ENCODE measurements at regions of chr9 and their contacts with region 1.

Region 1: GRCh38 chr9:6681147-6681956 is 35.8 kb upstream of the GLDC start:
- DNase-seq: peak; percentile 79 to 94 (median 88)
- ATAC-seq: peak; percentile 87 to 93 (median 90)
- H3K4me3 ChIP-seq: peak overlapping the region; percentile 79 to 93
- H3K4me3 Mint-ChIP-seq: peak overlapping the region; percentile 91 to 93 (median 91)
- H3K27ac ChIP-seq: peak overlapping the region; percentile 98
- H3K27ac Mint-ChIP-seq: peak overlapping the region; percentile 98
- H3K4me1 ChIP-seq: peaks cover 15 to 21% of the 10 kb centered on the region in 2 experiments
- H3K4me1 Mint-ChIP-seq: peaks cover 19 to 24% (median 22%) of the 10 kb centered on the region in 3 donors
- H3K27me3 ChIP-seq: no peaks in the 10 kb centered on the region
- H3K27me3 Mint-ChIP-seq: no peaks in the 10 kb centered on the region

Region 2: DNA sequence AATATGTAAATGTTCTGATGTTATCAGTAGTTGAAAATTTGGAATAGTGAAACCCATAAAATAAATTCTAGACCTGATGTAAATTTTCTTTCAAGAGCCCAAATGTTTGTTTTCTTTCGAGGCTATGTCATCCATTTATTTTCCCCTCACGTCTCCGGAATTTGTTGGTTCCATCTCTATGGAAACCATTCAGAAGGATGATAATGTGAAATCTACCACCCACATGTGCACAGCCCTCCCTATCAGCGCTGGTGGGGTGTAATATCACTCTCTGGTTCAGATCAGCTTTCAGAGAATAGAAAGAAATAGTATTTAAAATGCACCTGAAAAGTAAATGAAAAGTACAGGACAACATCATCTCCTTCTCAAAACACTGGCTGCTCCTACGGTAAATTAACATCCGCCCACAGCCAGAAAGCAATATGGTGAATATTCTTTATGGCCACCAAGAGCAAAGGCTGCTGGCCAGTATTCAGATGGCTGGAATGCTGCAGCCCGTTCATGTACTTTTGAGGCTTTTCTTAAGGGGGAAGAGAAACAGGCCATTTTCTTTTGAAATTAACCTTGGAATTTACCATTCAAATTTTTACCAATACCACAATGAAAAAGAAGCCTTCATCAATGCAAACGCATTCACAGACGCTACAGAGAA is 64.3 kb before region 1 on chr9:
- CTCF ChIA-PET with region 1: no interaction called
- POLR2A ChIA-PET with region 1: interaction called in 1 of 2 experiments, 12 read pairs
- DNase-seq: no peak
- ATAC-seq: no peak
- H3K4me3 ChIP-seq: no peak overlapping the region
- H3K4me3 Mint-ChIP-seq: no peak overlapping the region
- H3K27ac ChIP-seq: no peak overlapping the region
- H3K27ac Mint-ChIP-seq: no peak overlapping the region
- H3K4me1 ChIP-seq: no peaks in the 10 kb centered on the region
- H3K4me1 Mint-ChIP-seq: no peaks in the 10 kb centered on the region
- H3K27me3 ChIP-seq: no peaks in the 10 kb centered on the region
- H3K27me3 Mint-ChIP-seq: peaks cover 3 to 4% of the 10 kb centered on the region in 2 donors

Region 3: DNA sequence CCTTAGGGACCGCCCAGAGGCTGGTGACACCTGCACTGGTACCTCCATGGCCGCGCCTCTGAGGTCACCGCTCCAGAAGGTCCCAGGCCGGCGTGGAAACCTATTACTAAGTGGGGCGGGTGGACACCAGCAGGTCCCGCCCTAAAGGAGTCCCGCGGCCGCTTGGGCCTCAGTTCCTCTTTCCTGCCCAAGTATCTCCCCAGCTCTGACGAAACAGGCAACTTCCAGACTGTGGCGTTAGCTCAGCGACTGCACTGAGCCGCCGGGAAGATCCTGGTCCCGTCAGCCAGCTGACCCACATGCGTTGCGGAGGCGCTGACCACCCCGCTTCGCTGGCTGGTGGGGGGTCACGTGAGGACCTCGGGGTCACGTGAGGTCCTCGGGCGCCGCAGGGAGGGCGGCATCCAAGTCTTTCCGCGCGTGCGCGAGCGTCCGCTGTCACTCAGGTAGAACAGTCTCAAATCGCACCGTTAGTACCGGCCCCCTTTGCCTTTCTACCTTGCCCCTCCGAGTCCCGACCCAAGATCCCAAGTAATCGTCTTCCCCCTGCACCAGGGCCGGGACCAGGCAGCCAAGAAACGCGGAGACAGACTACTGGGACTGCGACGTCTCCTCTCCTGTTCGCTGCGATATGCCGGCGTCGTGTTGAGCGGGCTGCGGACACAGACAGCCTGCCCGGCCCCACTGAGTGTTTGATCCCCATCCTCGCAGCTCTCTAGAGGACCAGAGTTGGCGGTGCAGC is 22.7 kb after region 1 on chr9:
- CTCF ChIA-PET with region 1: interaction called in 1 of 2 experiments, 6 read pairs
- POLR2A ChIA-PET with region 1: interaction called, 7 to 13 read pairs
- DNase-seq: peak in 34 of 35 experiments; percentile 53 to 92 (median 80)
- ATAC-seq: peak; percentile 88 to 92 (median 92)
- H3K4me3 ChIP-seq: peak overlapping the region; percentile 82 to 96
- H3K4me3 Mint-ChIP-seq: peak overlapping the region; percentile 88 to 97 (median 93)
- H3K27ac ChIP-seq: peak overlapping the region; percentile 96
- H3K27ac Mint-ChIP-seq: peak overlapping the region; percentile 94 to 97
- H3K4me1 ChIP-seq: peaks cover 5 to 13% of the 10 kb centered on the region in 2 experiments
- H3K4me1 Mint-ChIP-seq: peaks cover 13 to 19% (median 16%) of the 10 kb centered on the region in 3 donors
- H3K27me3 ChIP-seq: no peaks in the 10 kb centered on the region
- H3K27me3 Mint-ChIP-seq: no peaks in the 10 kb centered on the region

Region 4: DNA sequence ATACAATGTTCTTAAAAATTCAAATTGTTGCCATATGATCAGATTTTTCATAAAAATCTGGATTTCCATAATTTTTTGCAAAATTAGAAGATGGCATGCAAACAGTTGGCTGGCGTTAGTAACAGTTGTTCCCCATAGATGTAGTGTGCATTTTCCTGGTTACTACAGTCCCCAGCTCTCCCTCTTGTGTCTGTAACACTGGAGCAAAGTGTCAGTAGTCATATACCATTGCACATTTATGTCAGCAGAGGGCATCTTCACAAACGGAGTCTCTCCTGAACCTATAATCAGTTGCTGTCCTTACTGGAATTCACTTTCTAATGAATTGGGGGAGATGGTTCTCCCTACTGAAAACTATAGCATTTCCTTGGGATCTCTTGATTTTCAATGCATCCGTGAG is 1162.9 kb after region 1 on chr9:
- CTCF ChIA-PET with region 1: no interaction called
- POLR2A ChIA-PET with region 1: interaction called in 1 of 2 experiments, 10 read pairs
- DNase-seq: peak in 5 of 35 experiments; percentile 4 to 55 (median 9)
- ATAC-seq: peak in 2 of 4 experiments; percentile 63 to 69
- H3K4me3 ChIP-seq: no peak overlapping the region
- H3K4me3 Mint-ChIP-seq: no peak overlapping the region
- H3K27ac ChIP-seq: no peak overlapping the region
- H3K27ac Mint-ChIP-seq: no peak overlapping the region
- H3K4me1 ChIP-seq: no peaks in the 10 kb centered on the region
- H3K4me1 Mint-ChIP-seq: peaks cover 0 to 3% (median 0%) of the 10 kb centered on the region in 3 donors
- H3K27me3 ChIP-seq: no peaks in the 10 kb centered on the region
- H3K27me3 Mint-ChIP-seq: no peaks in the 10 kb centered on the region

Measured in T-cell (primary cell).